HAP-1 (cell line): ENCODE measurements at regions of chr13 and their contacts with region 1.

Region 1: DNA sequence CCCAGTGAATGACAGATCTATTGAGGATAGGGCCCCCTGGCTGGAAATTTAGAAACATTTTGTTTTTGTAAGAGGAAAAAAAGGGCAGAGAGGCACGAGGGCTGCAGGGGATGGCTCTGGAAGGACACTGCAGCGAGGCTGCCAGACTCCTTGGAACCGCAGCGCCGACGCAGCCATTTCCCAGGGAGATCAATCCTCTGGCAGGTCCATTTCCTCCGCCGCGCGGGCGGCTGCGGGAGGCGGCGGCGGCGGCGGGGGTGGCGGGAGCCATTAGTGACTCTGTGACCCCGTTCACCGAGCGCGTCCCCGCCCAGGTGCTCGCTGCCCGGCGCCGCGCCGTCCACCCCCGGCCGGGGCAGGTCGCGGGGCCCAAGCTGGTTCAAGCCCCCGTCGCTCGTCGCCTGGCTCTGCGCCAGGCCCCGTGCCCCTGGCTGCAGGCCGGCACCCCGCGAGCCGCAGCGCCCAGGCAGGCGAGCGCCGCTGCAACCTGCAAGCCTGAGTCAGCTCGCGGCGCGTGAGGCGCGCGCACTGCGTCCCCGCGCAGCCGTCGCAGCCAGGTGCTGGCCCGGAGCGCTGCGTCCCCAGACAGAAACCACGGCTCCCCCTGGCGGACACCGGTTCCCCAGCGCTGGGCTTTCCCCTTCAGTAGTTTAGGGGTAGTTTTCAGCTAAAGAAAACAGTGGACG is 192.6 kb downstream of the KATNAL1 start:
- DNase-seq: peak; percentile 71 to 95
- H3K4me3 ChIP-seq: peak overlapping the region; percentile 20
- H3K4me1 ChIP-seq: peaks cover 20% of the 10 kb centered on the region
- H3K27me3 ChIP-seq: no peaks in the 10 kb centered on the region

Region 2: GRCh38 chr13:29508130-29508875 is 606.4 kb before region 1 on chr13:
- in situ Hi-C with region 1: loop called (anchors 10 kb)
- DNase-seq: peak; percentile 67 to 87
- H3K4me3 ChIP-seq: no peak overlapping the region
- H3K4me1 ChIP-seq: no peaks in the 10 kb centered on the region
- H3K27me3 ChIP-seq: no peaks in the 10 kb centered on the region

Region 3: GRCh38 chr13:29767006-29767405 is 347.7 kb before region 1 on chr13:
- in situ Hi-C with region 1: loop called (anchors 5 kb)
- DNase-seq: peak in 1 of 2 experiments; percentile 39
- H3K4me3 ChIP-seq: no peak overlapping the region
- H3K4me1 ChIP-seq: peaks cover 6% of the 10 kb centered on the region
- H3K27me3 ChIP-seq: no peaks in the 10 kb centered on the region

Region 4: DNA sequence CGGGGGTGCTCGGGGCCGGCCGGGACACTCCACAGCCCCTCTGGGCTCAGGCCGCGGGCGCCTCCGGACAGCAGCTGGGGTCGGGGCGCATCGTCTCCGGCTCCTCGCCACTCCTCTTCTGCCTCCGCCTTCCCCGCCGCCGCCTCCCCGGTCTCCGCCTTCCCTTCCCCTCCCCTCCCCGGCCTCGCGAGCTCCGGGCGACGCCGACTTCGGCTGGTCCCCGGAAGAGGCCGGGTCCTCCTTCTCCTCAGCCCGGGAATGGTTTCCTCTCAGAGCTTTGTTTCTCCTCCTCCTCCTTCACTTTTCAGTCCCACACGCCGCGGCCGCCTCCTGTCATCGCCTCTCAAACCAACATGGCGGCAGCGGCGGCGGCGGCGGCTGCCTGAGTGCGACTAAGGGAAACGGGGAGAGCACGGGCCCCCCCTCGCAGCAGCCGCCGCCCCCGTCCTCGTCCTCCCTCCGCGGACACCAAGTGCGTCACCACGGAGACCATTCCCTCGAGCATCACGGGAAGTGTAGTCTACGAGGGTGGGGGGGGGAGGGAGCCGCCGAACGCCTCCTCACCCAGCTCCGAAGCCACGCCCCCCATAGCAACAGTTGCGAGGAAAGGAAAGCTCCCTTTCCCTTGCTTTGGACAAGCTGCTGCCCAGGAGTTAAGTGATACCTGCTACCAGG is 264.4 kb before region 1 on chr13 and contains the start of gene UBL3:
- in situ Hi-C with region 1: loop called (anchors 5 kb)
- DNase-seq: peak; percentile 91 to 96
- H3K4me3 ChIP-seq: peak within 1 kb of the TSS; percentile 78
- H3K4me1 ChIP-seq: peaks cover 20% of the 10 kb centered on the region
- H3K27me3 ChIP-seq: 0 out of 2 replicates have a peak, but pooled peaks cover 5% of the 10 kb centered on the region

Region 5: GRCh38 chr13:30567072-30567471 is 452.4 kb after region 1 on chr13:
- in situ Hi-C with region 1: no loop called
- DNase-seq: no peak
- H3K4me3 ChIP-seq: no peak overlapping the region
- H3K4me1 ChIP-seq: no peaks in the 10 kb centered on the region
- H3K27me3 ChIP-seq: no peaks in the 10 kb centered on the region

Region 6: DNA sequence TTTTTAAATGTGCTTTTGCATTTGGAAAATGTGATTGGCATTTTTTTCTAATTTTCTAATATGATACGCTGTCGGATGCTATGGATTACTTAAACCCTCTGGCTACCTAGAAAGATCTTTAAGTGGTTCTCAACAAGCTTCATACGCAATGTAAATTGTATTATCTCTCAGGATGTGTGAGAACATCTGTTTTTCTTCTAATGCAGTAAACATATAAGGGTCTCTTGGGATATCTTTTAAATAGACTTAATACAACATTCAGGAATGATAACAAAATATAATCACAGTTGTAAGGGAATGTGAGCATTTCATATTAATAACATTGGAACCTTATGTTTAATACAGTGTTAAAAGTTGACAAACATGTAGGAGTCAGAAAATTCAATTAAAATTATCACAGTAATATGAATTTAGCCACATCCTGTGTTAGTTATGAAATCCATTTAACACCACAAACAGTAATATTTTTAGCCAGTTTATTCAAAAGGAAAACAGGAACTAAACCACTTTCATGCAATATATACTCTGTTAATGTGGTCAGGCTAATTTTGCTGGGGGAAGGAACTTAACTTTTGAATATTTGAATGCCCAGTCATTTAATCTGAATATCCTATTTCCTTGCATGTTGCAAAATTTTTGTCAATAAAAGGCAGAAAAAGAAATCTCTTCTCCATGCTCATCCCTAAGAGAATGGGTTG is 605.6 kb after region 1 on chr13:
- in situ Hi-C with region 1: no loop called
- DNase-seq: no peak
- H3K4me3 ChIP-seq: no peak overlapping the region
- H3K4me1 ChIP-seq: no peaks in the 10 kb centered on the region
- H3K27me3 ChIP-seq: no peaks in the 10 kb centered on the region

Region 7: GRCh38 chr13:31029102-31029501 is 914.4 kb after region 1 on chr13:
- in situ Hi-C with region 1: no loop called
- DNase-seq: no peak
- H3K4me3 ChIP-seq: no peak overlapping the region
- H3K4me1 ChIP-seq: no peaks in the 10 kb centered on the region
- H3K27me3 ChIP-seq: no peaks in the 10 kb centered on the region